ENCODE measurements at regions of chr5 and their contacts with region 1.

Region 1: DNA sequence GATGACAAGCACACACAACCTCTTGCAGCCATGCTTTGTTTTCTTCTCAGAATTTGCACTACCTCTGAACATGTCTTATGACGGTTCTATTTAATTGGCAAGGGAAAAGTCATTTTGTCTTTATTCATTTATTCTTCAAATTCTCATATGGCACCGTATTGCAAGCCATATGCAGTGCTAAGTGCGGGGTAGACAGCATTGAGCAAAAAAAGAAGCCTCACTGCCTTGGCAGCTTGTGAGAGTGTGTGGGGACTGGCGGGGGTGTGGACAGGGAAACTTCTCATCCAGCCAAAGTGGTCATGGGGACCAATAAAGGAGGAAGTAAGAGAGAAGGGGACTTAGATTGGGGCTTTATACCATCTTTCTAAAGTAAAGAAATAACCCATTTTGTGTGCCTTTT is 160.0 kb downstream of the CDH12 start:
- DNase-seq: no peak
- ATAC-seq: no peak

Region 2: GRCh38 chr5:22754155-22754554 is 61.0 kb after region 1 on chr5:
- intact Hi-C with region 1: loop called (anchors 2 kb)
- DNase-seq: no peak
- ATAC-seq: no peak

Measured in sciatic nerve (tissue), 2 donors.